ENCODE measurements at regions of chr3 and their contacts with region 1.

Region 1: GRCh38 chr3:64238971-64239667 is 13.9 kb upstream of the PRICKLE2 start:
- DNase-seq: peak; percentile 97
- ATAC-seq: peak; percentile 98
- H3K4me3 ChIP-seq: no peak overlapping the region
- H3K27ac ChIP-seq: peak overlapping the region; percentile 81
- H3K4me1 ChIP-seq: peaks cover 13% of the 10 kb centered on the region
- H3K27me3 ChIP-seq: no peaks in the 10 kb centered on the region
- CTCF ChIP-seq: peak; percentile 5; the same call in 1 of the 2 replicates
- POLR2A ChIP-seq: peak; percentile 66
- RAD21 ChIP-seq: peak; percentile 36; the same call in 1 of the 2 replicates

Region 2: DNA sequence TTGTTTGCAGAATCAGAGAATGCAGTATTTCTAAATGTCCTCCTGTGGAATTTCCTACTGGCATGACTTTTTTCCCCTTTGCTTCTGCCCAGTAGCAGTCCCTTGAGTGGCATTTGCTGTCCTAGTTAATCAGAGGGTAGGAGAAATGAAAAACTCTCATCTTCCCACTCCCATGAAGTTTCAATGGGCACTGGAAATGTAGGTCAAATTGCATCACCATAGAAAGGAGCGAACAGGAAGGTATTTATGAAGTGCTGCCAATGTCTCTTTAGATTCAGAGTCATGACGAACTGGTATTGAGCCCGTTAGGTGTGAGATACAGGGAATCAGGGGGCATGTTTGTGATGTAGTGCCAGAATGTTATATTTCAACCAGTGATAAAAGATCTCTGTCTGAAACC is 352.3 kb before region 1 on chr3:
- CTCF ChIA-PET with region 1: no interaction called
- POLR2A ChIA-PET with region 1: no interaction called
- dilution Hi-C with region 1: no loop called
- in situ Hi-C with region 1: no loop called
- intact Hi-C with region 1: no loop called
- DNase-seq: no peak
- ATAC-seq: peak; percentile 29; the same call in 1 of the 2 replicates
- H3K4me3 ChIP-seq: no peak overlapping the region
- H3K27ac ChIP-seq: no peak overlapping the region
- H3K4me1 ChIP-seq: no peaks in the 10 kb centered on the region
- H3K27me3 ChIP-seq: no peaks in the 10 kb centered on the region
- CTCF ChIP-seq: no peak
- POLR2A ChIP-seq: no peak
- RAD21 ChIP-seq: no peak

Region 3: DNA sequence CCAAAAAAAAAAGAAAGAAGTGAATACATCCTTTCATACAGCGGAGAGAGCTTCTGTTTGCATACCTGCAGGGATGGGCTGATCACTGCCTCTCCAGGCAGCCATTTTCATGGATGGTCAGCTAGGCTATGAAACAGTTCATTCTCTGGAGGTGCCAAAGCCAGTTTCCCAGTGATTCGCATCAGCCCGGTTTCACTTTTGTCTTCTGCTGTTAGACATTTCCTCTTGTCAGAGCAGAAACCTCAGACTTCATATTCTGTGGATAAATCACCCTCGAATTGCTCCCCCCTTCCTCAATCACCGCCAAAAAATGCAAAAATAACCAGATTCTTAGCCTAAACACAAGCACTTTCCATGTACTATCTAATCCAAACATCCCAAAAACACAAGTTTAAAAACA is 223.1 kb after region 1 on chr3:
- CTCF ChIA-PET with region 1: no interaction called
- POLR2A ChIA-PET with region 1: no interaction called
- dilution Hi-C with region 1: no loop called
- in situ Hi-C with region 1: no loop called
- intact Hi-C with region 1: loop called (anchors 5 kb)
- DNase-seq: peak; percentile 93
- ATAC-seq: peak; percentile 73
- H3K4me3 ChIP-seq: peak overlapping the region; percentile 28; the same call in 1 of the 2 replicates
- H3K27ac ChIP-seq: peak overlapping the region; percentile 95
- H3K4me1 ChIP-seq: peaks cover 21% of the 10 kb centered on the region
- H3K27me3 ChIP-seq: no peaks in the 10 kb centered on the region
- CTCF ChIP-seq: no peak
- POLR2A ChIP-seq: no peak
- RAD21 ChIP-seq: no peak

Measured in IMR-90 (cell line).